Cardiac septum (tissue), 1 donor: ENCODE measurements at regions of chr2 and their contacts with region 1.

Region 1: GRCh38 chr2:165953655-165954606 is at the start of gene TTC21B:
- DNase-seq: peak; percentile 97
- total RNA-seq, gene TTC21B: 12.5 TPM

Region 2: GRCh38 chr2:165833158-165833557 is 120.8 kb before region 1 on chr2:
- intact Hi-C with region 1: no loop called
- DNase-seq: no peak

Region 3: GRCh38 chr2:166127217-166128155 is 173.6 kb after region 1 on chr2 and contains the start of gene SCN1A:
- intact Hi-C with region 1: loop called (anchors 2 kb)
- DNase-seq: no peak
- total RNA-seq, gene SCN1A: 0.03 TPM

Region 4: GRCh38 chr2:166180951-166181812 is 227.3 kb after region 1 on chr2:
- intact Hi-C with region 1: loop called (anchors 5 kb)
- DNase-seq: no peak